ENCODE measurements at regions of chr1 and their contacts with region 1.

Region 1: DNA sequence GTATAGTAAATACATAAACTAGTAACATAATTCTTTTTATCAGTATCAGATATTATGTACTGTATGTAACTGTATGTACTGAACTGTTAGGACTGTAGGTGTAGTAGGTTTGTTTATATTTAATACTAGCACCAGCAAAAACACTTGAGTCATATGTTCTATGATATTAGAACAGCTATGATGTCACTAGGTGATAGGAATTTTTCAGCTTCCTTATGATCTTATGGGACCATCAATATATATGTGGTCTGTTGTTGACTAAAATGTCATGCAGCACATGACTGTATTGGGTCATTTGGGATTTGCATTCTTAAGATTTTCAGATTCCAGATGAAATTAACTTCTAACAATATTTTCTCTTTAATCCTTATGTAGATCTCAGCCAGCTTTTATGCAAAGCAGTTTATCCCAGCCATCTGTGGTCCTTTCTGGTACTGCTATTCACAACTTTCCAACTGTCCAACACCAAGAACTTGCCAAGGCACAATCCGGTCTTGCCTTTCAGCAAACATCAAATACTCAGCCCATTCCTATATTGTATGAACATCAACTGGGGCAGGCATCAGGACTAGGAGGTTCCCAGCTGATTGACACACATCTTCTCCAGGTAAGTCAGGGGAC is 38.4 kb upstream of the MYOCOS start:
- DNase-seq: no peak
- CTCF ChIP-seq: no peak

Region 2: GRCh38 chr1:171433451-171433850 is 150.2 kb before region 1 on chr1:
- CTCF ChIA-PET with region 1: no interaction called
- POLR2A ChIA-PET with region 1: no interaction called
- DNase-seq: no peak
- CTCF ChIP-seq: no peak

Region 3: GRCh38 chr1:171566467-171566866 is 17.2 kb before region 1 on chr1:
- CTCF ChIA-PET with region 1: interaction called, 19 read pairs
- POLR2A ChIA-PET with region 1: no interaction called
- DNase-seq: no peak
- CTCF ChIP-seq: no peak

Measured in GM10248 (cell line).